Cardiac septum (tissue), 1 donor: ENCODE measurements at regions of chr10 and their contacts with region 1.

Region 1: DNA sequence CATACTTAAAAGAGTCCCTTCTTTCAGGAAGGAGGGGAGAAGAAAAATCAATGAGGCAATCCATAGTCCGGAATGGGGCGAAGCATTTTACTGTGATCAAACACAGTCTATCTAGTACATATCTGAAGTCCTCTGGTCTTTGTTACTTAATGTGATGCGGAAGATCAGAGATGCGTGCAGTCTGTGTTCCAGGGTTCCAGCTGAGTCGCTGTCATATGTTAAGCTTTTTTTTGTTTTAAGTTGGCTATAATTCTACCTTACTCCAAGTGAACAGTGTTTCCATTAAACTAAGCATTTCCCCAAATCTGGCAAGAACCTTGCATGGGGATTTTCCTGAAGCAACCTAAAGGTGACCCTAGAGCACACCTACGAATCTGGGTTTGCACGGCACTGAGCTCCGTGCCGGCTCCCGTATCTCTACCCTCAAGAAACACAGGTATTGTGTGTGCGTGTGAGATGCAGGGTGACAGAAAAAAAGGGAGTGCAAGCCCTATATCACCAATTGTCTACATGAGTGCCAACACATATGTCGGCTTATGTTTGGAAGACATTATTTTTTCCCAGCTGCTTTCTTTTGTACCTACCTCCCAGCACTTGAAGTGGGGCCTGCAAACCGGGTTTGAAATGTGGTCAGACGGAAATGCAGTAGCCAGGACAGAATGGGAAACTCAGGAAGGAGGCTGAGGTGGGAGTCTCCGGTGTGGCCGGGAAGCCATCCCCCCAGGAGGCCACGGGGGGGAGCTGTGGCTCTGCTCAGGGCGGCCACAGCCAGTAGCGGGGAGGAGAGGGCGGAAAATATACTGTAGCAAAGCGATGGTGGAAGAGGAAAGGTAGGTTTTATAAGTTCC is 435.8 kb upstream of the MGMT start:
- DNase-seq: no peak

Region 2: DNA sequence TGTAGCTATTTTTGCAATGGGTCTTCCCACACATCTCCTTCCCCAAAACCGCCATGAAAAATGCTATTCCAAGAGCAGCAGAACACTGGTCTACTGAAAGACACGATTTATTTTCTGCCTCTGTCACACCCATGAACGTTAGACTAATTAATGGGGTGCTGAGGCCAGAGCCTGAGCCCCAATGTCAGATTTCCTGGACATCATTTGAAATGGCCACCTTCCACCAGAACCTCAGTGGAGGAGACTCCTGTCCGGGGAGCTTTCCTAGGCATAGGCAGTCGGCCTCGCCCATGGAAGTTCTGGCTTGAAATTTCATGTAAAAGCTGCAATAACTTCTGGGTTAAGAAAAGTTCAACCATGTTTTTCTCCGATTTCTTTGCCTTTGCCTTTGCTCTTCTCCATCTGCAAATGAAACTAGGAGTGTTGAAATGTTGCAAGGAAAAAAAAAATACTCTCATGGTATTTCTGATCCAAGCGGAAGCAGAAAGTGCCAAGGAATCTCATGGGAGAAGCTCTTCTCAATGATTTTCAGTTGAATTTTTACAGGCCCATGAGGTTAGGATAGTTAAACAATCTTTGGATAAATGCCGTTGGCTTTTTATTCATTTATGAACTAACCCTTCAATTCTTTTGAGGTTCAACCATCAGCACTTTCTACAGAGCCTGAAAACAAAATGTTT is 135.0 kb before region 1 on chr10:
- intact Hi-C with region 1: no loop called
- DNase-seq: no peak

Region 3: DNA sequence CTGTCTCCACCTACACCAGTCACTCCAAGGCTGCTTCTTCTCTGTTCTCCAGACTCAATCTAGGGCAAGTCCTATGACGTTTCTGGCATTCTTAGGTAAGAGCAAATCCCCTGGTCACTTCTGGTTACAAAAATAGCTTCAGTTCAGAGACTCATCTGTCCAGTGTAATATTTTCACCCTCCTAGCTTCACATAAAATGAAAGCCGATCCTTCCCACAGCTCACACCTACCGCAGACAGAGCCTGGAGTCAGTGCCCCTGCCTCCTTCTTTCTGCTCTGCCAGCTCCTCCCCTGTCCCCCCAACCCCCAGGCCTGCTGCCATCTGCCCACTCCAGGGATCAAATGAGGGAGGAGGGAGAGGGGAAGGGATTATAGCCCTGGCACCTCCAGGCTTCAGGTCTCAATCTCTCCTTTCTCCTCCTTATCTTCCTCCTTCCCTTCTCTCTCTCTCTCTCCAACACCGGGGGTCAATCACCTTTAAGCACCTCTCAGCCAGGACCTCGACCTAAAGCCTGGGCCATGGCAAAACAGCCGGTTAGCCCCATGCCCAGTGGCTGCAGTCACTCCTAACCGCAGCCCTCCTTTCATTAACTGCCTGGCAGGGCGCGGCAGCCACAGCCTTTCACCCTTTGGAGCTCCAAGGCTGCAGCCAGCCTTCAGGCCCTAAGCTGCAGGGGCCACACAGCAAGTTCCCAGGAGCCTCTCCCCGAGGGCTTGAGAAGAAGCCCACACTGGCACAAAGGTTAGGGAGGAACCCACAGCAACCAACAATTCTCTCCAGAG is 143.2 kb after region 1 on chr10:
- intact Hi-C with region 1: no loop called
- DNase-seq: no peak

Region 4: GRCh38 chr10:129332476-129332875 is 301.3 kb after region 1 on chr10:
- intact Hi-C with region 1: loop called (anchors 5 kb)
- DNase-seq: no peak